Breast epithelium (tissue), 4 donors: ENCODE measurements at regions of chr17 and their contacts with region 1.

Region 1: DNA sequence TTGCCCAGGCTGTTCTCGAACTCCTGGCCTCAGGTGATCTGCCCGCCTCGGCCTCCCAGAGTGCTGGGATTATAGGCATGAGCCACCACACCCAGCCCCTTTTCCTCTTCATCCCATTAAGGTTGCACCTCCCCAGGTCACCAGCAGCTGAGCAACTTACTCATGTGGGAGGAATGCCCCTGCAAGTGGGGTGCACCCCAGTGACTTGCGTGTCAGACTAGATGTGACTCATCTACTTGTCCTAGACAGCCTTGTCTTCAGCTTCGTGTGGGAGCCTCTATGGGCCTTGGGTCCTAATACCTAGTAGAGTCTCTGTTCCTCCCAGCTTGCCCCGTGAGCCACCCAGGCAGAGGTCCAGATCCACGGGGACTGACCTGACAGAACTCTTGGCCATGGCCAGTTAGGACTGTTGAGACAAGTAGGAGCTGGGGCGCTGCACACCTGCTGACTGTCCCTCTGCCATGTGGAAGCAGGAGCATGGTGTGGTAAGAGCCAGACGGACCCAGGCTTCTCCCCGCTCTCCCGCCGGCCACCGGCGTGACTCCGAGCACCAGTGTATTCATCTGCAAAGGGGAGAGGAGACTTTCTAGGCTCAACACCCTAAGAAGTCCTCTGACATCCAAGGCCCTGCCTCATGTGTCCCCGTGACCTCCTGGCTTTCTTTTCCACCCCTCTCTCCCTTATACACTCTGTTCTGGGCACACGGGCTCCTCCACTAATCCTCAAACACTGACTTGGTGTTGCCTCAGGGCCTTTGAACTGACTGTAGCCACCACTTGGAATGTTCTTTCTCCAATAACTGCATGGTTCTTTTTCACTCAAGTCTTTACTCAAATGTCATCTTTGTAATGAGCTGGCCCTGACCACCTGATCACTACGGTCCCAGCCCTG is 11.6 kb upstream of the CBX4 start:
- DNase-seq: no peak
- H3K4me3 ChIP-seq: no peak overlapping the region
- H3K27ac ChIP-seq: no peak overlapping the region
- H3K4me1 ChIP-seq: no peaks in the 10 kb centered on the region
- H3K27me3 ChIP-seq: no peaks in the 10 kb centered on the region
- CTCF ChIP-seq: no peak
- POLR2A ChIP-seq: no peak

Region 2: DNA sequence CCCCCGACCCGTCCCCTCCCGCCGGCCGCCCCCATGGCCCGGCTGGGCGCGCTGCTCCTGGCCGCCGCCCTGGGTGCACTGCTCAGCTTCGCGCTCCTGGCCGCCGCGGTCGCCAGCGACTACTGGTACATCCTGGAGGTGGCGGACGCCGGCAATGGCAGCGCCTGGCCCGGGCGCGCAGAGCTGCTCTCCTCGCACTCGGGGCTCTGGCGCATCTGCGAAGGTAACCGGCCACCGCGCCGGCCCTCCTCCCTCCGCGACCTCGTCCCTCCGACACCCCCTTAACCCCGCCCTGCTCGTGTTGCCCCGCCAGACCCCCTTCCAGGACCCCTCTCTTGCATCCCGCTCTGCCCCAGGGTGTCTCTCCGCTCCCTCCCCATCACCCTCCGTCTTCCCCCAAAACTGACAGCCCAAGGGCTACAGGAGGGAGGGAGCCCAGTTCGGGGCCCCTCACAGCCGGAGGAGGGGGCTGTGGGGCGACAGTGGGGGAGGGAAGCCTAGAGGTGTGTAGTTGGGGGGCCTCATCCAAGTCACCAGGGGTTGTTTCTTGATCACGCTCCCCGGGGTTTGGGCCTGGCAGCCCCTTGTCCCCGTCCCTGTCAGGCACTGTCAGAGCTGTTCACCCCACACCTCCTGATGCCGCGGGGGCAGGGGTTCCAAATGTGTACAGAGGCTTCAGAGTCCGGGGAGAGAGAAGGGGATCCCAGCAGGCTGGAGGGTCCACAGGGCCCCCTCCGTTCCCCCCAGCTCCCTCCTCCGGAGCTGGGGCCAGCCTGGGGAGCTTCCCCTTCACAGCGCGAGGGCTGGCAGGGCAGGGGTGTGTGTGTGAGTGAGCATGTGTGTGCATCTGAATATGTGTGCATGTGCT is 1618.6 kb before region 1 on chr17:
- intact Hi-C with region 1: loop called (anchors 10 kb)
- DNase-seq: no peak
- H3K4me3 ChIP-seq: peak overlapping the region in 1 of 3 donors; percentile 54
- H3K27ac ChIP-seq: no peak overlapping the region
- H3K4me1 ChIP-seq: no peaks in the 10 kb centered on the region
- H3K27me3 ChIP-seq: peaks cover 5 to 24% of the 10 kb centered on the region in 2 donors
- CTCF ChIP-seq: no peak
- POLR2A ChIP-seq: no peak

Region 3: DNA sequence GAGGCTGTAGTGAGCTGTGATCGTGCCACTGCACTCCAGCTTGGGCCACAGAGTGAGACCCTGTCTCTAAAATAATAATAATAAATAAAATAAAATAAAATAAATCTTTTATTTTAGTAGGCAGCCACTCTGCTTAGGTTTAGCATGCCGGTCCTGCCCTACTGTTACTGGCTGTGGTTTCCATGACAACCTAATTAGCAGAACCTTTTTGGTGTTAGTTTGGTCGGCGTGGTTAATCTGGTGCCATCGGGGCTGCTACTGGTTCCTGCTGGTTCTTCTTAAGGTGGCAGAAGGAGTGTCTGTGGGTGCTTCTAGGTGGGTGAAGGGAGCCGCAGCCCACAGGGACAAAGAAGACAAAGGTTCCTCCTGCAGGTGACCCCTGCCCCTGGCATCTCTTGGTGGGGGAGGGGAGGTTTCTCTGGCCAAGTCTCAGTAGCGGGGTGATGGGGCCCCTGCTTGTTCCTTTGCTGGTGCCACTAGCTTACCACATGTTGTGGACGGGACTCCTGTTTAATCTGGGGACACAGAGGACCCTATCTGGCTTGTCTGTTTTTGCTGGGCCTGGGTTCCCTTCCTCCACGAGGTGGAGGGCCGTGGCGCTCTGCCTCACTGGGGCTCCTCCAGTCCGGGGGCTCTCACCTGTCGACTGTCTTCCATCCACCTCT is 26.4 kb after region 1 on chr17:
- intact Hi-C with region 1: no loop called
- DNase-seq: no peak
- H3K4me3 ChIP-seq: no peak overlapping the region
- H3K27ac ChIP-seq: no peak overlapping the region
- H3K4me1 ChIP-seq: no peaks in the 10 kb centered on the region
- H3K27me3 ChIP-seq: peaks cover 0 to 11% of the 10 kb centered on the region in 2 donors
- CTCF ChIP-seq: no peak
- POLR2A ChIP-seq: no peak